ENCODE measurements at regions of chr12 and their contacts with region 1.

Region 1: GRCh38 chr12:116818948-116819832 is 62.1 kb downstream of the HRK start:
- DNase-seq: peak; percentile 96
- H3K4me3 Mint-ChIP-seq: peak overlapping the region; percentile 78
- H3K27ac Mint-ChIP-seq: peak overlapping the region; percentile 93
- H3K4me1 Mint-ChIP-seq: peaks cover 8% of the 10 kb centered on the region
- H3K27me3 Mint-ChIP-seq: no peaks in the 10 kb centered on the region
- CTCF ChIP-seq: no peak

Region 2: DNA sequence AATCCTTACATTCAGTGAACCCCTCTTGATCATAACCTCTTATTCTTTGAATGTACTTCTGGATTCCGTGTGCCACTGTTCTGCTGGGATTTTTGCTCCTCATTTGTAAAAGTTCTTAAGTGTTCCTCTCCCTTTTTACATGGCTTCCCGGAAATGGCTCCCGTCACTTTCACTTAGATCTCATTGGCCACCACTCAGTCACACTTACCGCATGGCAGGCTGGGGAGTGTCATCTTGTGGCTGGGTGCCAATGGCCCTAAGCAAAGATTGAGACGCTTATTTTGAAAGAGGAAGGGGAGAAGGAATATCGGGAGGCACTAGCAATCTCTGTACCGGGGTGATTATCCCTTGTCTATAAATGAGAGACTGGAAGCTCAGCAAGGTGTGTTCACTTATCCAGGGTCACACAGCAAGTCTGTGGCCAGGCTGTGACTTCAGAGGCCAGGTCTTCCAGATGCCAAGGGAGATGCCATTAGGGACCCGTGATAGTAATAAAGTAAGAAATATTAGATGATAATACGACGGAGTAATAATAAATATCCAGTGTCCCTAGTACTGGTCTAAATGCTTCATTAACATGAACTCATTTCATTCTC is 12.2 kb before region 1 on chr12:
- CTCF ChIA-PET with region 1: interaction called, 10 read pairs
- intact Hi-C with region 1: no loop called
- DNase-seq: no peak
- H3K4me3 Mint-ChIP-seq: no peak overlapping the region
- H3K27ac Mint-ChIP-seq: no peak overlapping the region
- H3K4me1 Mint-ChIP-seq: no peaks in the 10 kb centered on the region
- H3K27me3 Mint-ChIP-seq: no peaks in the 10 kb centered on the region
- CTCF ChIP-seq: no peak

Region 3: DNA sequence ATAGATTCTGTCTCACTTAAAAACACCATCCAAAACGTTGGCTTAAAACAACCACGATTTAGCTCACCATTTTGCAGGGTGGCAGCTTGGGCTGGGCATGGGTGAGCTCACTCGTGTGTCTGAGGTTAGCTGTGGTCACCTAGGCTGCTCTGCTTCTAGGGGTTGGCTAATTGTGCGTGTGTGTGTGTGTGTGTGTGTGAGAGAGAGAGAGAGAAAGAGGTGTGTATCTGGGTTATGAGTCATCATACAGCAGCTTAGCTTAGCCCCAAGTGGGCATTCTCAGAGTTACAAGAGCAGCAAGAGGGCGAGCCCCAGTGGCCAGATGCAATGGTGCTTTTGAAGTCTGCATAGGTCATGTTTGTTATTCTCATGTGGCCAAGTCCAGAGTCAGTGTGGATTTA is 97.5 kb after region 1 on chr12:
- CTCF ChIA-PET with region 1: no interaction called
- intact Hi-C with region 1: loop called (anchors 5 kb)
- DNase-seq: peak; percentile 69
- H3K4me3 Mint-ChIP-seq: peak overlapping the region; percentile 7
- H3K27ac Mint-ChIP-seq: peak overlapping the region; percentile 92
- H3K4me1 Mint-ChIP-seq: peaks cover 87% of the 10 kb centered on the region
- H3K27me3 Mint-ChIP-seq: no peaks in the 10 kb centered on the region
- CTCF ChIP-seq: peak; percentile 34

Measured in Calu3 (cell line).